CD4-positive, alpha-beta T cell (primary cell): ENCODE measurements at regions of chr19 and their contacts with region 1.

Region 1: DNA sequence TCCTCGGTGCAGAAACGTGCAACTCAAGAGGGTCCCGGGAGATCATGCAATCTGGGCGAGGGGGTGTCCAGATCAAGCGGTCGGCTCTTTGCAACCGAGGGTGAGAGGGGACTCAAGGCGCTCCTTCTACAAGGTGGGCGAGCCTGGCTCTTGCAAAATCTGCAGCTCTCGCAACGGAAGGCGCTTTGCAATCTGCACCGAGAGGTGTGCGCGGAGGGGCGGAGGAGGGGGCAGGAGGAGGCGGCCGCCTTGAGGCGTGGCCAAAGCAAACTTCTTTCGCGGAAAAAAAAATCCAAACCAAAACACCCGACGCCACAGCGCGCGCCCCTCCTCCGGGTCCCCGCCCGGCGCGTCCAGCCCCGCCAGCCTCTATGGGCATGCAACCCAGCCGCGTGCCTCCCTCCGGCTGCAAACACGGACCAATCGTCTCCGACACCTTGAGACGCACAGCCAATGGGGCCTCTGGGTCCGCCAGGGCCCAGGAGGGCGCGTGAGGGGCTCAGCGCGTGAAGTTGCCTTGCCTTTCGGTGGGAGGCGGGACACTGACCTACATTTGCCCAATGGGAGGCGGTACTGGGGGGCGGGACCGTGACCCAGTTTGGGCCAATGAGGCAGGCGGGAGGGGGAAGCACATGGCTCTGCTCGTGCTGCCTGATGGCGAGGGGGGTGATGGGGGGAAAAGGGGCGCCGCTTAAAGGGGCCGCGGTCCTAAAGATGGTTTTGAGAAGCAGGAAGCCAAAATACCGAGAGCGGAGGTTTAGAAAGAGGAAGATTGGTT is at the start of gene DBP:
- DNase-seq: peak; percentile 99 to 100 (median 100)
- ATAC-seq: peak; percentile 69
- H3K4me3 ChIP-seq: peak within 1 kb of the TSS; percentile 71
- H3K4me3 Mint-ChIP-seq: peak within 1 kb of the TSS; percentile 94
- H3K27ac ChIP-seq: peak within 1 kb of the TSS; percentile 86 to 94
- H3K27ac Mint-ChIP-seq: peak within 1 kb of the TSS; percentile 97
- H3K4me1 ChIP-seq: peaks cover 59% of the 10 kb centered on the region
- H3K4me1 Mint-ChIP-seq: peaks cover 50% of the 10 kb centered on the region
- H3K27me3 ChIP-seq: no peaks in the 10 kb centered on the region
- H3K27me3 Mint-ChIP-seq: no peaks in the 10 kb centered on the region
- CTCF ChIP-seq: no peak
- total RNA-seq, gene DBP: 48.3 to 55.6 TPM

Region 2: GRCh38 chr19:48468775-48469288 is 168.5 kb before region 1 on chr19:
- CTCF ChIA-PET with region 1: no interaction called
- POLR2A ChIA-PET with region 1: no interaction called
- intact Hi-C with region 1: no loop called
- DNase-seq: peak; percentile 98 to 100 (median 99)
- ATAC-seq: peak; percentile 89
- H3K4me3 ChIP-seq: peak overlapping the region; percentile 96
- H3K4me3 Mint-ChIP-seq: peak overlapping the region; percentile 90
- H3K27ac ChIP-seq: peak overlapping the region; percentile 25 to 79
- H3K27ac Mint-ChIP-seq: peak overlapping the region; percentile 82
- H3K4me1 ChIP-seq: peaks cover 22% of the 10 kb centered on the region
- H3K4me1 Mint-ChIP-seq: peaks cover 21% of the 10 kb centered on the region
- H3K27me3 ChIP-seq: no peaks in the 10 kb centered on the region
- H3K27me3 Mint-ChIP-seq: no peaks in the 10 kb centered on the region
- CTCF ChIP-seq: no peak

Region 3: DNA sequence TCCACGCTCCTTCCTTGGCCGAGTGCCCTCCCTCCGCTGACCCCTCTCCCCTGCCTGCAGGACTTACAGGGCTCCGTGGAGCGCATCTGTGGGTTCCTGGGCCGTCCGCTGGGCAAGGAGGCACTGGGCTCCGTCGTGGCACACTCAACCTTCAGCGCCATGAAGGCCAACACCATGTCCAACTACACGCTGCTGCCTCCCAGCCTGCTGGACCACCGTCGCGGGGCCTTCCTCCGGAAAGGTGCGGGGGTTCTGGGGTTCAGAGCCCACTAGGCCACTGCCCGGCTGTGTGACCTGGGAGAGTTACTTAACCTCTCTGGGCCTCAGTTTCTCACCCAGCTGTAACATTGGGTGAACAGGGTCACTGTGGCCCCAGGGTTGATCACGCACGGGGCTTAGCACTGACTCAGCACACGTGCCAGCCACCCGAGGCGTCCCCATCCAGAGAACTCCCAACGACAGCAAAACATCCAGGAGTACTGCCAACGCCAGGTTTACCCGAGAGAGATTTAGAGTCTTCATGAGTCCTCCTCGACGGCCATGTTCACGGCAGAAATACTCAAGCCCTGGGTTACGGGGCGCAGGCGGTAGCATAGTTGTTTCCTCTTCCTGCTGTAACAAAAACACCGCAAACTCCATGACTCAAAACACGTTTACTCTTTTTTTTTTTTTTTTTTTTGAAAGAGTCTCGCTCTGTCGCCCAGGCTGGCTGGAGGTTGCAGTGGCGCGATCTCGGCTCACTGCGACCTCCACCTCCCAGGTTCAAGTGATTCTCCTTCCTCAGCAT is 40.5 kb before region 1 on chr19:
- CTCF ChIA-PET with region 1: no interaction called
- POLR2A ChIA-PET with region 1: no interaction called
- intact Hi-C with region 1: no loop called
- DNase-seq: peak in 12 of 14 experiments; percentile 29 to 84 (median 46)
- ATAC-seq: peak; percentile 94
- H3K4me3 ChIP-seq: peak overlapping the region; percentile 55
- H3K4me3 Mint-ChIP-seq: peak overlapping the region; percentile 80
- H3K27ac ChIP-seq: peak overlapping the region; percentile 50 to 61
- H3K27ac Mint-ChIP-seq: peak overlapping the region; percentile 88
- H3K4me1 ChIP-seq: peaks cover 35% of the 10 kb centered on the region
- H3K4me1 Mint-ChIP-seq: peaks cover 10% of the 10 kb centered on the region
- H3K27me3 ChIP-seq: no peaks in the 10 kb centered on the region
- H3K27me3 Mint-ChIP-seq: no peaks in the 10 kb centered on the region
- CTCF ChIP-seq: no peak

Region 4: DNA sequence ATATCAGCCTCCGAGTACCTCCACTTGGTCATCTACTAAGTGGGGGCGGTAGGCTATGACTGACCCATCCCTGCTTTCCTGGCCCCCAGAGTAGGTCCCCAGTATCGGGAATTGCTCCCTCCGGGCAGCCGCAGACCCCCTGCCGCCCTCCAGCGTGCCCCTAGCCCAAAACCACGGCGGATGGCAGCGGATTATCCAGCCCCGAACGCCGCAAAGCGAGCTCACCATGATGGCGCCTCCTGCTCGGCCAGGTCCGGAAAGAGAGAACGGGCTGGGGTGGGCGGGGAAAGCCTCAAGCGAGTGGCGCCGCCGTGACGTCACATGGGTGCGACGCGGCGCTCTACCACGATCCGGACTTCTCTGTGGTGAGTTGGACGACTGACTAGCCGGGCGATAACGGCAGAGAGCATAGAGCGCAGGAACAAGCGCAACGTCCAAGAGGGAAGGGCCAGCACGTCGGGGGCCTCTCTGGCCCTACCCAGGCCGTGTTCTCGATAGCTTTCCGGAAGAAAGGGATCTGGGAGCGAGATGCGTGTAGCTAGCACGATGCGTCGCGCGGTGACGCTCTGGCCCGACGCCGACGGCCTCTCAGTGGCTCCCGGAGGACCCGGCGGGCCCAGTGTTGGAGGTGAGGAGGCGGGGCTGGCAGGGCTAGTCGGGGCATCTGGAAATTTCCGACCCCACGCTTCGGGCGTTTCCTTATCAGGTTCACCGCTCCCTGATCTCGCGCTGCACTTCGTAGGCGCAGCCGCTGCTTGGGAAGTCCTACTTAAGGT is 18.3 kb before region 1 on chr19 and contains the starts of genes RPL18 and SPHK2:
- CTCF ChIA-PET with region 1: interaction called, 4 read pairs
- POLR2A ChIA-PET with region 1: interaction called, 45 read pairs
- intact Hi-C with region 1: loop called (anchors 1 kb)
- DNase-seq: peak; percentile 89 to 99 (median 95)
- ATAC-seq: peak; percentile 67
- H3K4me3 ChIP-seq: peak within 1 kb of the TSS; percentile 94
- H3K4me3 Mint-ChIP-seq: peak within 1 kb of the TSS; percentile 98
- H3K27ac ChIP-seq: peak within 1 kb of the TSS; percentile 76 to 89
- H3K27ac Mint-ChIP-seq: peak within 1 kb of the TSS; percentile 97
- H3K4me1 ChIP-seq: peaks cover 64% of the 10 kb centered on the region
- H3K4me1 Mint-ChIP-seq: peaks cover 58% of the 10 kb centered on the region
- H3K27me3 ChIP-seq: no peaks in the 10 kb centered on the region
- H3K27me3 Mint-ChIP-seq: no peaks in the 10 kb centered on the region
- CTCF ChIP-seq: no peak
- total RNA-seq, gene RPL18: 2,820 to 2,913 TPM
- total RNA-seq, gene SPHK2: 14.1 to 15.3 TPM

Region 5: GRCh38 chr19:48624067-48624594 is 13.2 kb before region 1 on chr19:
- CTCF ChIA-PET with region 1: interaction called, 4 read pairs
- POLR2A ChIA-PET with region 1: interaction called, 45 read pairs
- intact Hi-C with region 1: loop called (anchors 1 kb)
- DNase-seq: peak; percentile 88 to 98 (median 95)
- ATAC-seq: peak; percentile 77
- H3K4me3 ChIP-seq: peak overlapping the region; percentile 48
- H3K4me3 Mint-ChIP-seq: peak overlapping the region; percentile 86
- H3K27ac ChIP-seq: peak overlapping the region; percentile 57 to 58
- H3K27ac Mint-ChIP-seq: peak overlapping the region; percentile 77
- H3K4me1 ChIP-seq: peaks cover 45% of the 10 kb centered on the region
- H3K4me1 Mint-ChIP-seq: peaks cover 40% of the 10 kb centered on the region
- H3K27me3 ChIP-seq: no peaks in the 10 kb centered on the region
- H3K27me3 Mint-ChIP-seq: no peaks in the 10 kb centered on the region
- CTCF ChIP-seq: no peak

Region 6: DNA sequence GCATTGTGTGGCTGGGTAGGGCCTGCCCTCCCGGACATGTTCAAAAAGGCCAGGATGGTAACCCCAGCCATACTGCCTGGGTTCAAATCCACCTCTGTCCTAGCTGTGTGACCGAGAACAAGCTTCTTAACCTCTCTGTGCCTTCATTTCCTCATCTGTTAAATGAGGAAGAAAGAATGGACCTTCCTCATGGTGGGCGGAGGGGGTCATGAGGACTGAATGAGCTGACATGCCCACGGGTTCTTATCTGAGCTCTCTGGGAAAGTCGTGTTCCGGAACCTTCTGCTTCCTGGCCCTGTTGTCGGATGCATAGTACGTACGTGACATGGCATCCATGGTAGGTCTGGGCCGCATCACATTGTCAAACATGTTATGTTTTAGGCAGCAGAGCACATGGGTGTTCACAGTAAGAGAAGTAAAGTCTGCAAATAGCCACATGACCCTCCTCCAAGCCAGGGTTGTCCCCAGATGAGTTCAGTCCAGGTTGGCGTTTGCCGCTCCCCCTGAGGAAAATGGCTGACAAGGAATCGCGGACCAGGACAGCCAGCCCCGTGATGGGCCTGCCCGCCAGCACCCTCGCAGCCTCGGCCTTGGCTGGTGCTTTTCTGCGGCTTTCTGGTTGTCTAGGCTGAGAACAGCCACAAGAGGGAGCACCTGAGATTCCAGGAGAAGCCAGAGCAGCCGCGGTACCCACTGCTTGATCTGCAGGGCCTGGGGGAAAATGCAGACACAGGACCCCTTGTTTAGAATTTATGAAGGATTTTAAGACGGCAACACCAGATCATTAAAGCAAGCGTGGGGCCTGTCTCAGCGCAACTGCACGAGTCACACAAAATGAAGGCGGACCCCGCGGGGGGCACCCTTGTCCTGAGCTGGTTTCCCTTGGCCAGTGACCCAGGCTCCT is 37.8 kb after region 1 on chr19:
- CTCF ChIA-PET with region 1: no interaction called
- POLR2A ChIA-PET with region 1: interaction called, 3 read pairs
- intact Hi-C with region 1: loop called in 1 of 2 experiments (anchors 5 kb)
- DNase-seq: peak; percentile 62 to 89 (median 68)
- ATAC-seq: peak; percentile 98
- H3K4me3 ChIP-seq: no peak overlapping the region
- H3K4me3 Mint-ChIP-seq: no peak overlapping the region
- H3K27ac ChIP-seq: no peak overlapping the region
- H3K27ac Mint-ChIP-seq: no peak overlapping the region
- H3K4me1 ChIP-seq: peaks cover 9% of the 10 kb centered on the region
- H3K4me1 Mint-ChIP-seq: peaks cover 7% of the 10 kb centered on the region
- H3K27me3 ChIP-seq: no peaks in the 10 kb centered on the region
- H3K27me3 Mint-ChIP-seq: no peaks in the 10 kb centered on the region
- CTCF ChIP-seq: peak; percentile 84

Region 7: DNA sequence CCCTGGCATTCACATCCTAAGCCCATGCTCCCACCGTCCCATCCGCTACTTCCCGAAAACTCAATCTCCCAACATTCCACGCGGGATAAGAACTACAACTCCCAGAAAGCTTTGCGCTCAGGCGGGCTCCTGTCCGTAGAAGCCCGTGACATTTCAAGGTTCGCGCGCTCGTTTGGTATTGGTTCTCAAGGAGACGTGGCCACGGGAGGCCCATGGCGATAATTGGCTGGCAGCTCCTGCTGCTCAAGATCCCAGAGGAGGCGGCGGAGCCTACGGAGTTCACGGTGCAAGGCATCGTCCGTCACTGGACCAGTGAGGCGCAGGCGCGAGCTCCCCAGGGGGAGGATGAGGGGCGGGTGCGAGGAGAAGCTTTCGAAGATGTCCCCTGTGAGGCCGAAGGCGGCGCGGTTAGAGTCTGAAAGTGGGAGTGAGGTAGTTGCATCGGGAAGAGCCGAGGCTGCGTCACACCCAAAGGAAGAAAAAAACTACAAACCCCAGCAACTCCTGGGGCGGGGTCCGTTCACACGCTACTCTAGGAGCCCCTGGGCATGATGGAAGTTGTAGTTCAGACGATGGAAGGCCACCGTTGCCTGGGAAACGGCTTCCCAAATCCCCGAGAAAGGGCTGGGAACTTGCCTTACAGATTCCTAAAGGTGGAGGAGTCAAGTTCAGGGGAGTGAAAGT is 83.4 kb after region 1 on chr19:
- CTCF ChIA-PET with region 1: no interaction called
- POLR2A ChIA-PET with region 1: interaction called, 6 read pairs
- intact Hi-C with region 1: loop called in 1 of 2 experiments (anchors 2 kb)
- DNase-seq: peak; percentile 81 to 96 (median 86)
- ATAC-seq: peak; percentile 79
- H3K4me3 ChIP-seq: peak overlapping the region; percentile 84
- H3K4me3 Mint-ChIP-seq: peak overlapping the region; percentile 92
- H3K27ac ChIP-seq: peak overlapping the region; percentile 81 to 94
- H3K27ac Mint-ChIP-seq: peak overlapping the region; percentile 96
- H3K4me1 ChIP-seq: peaks cover 32% of the 10 kb centered on the region
- H3K4me1 Mint-ChIP-seq: peaks cover 23% of the 10 kb centered on the region
- H3K27me3 ChIP-seq: no peaks in the 10 kb centered on the region
- H3K27me3 Mint-ChIP-seq: no peaks in the 10 kb centered on the region
- CTCF ChIP-seq: no peak

Region 8: DNA sequence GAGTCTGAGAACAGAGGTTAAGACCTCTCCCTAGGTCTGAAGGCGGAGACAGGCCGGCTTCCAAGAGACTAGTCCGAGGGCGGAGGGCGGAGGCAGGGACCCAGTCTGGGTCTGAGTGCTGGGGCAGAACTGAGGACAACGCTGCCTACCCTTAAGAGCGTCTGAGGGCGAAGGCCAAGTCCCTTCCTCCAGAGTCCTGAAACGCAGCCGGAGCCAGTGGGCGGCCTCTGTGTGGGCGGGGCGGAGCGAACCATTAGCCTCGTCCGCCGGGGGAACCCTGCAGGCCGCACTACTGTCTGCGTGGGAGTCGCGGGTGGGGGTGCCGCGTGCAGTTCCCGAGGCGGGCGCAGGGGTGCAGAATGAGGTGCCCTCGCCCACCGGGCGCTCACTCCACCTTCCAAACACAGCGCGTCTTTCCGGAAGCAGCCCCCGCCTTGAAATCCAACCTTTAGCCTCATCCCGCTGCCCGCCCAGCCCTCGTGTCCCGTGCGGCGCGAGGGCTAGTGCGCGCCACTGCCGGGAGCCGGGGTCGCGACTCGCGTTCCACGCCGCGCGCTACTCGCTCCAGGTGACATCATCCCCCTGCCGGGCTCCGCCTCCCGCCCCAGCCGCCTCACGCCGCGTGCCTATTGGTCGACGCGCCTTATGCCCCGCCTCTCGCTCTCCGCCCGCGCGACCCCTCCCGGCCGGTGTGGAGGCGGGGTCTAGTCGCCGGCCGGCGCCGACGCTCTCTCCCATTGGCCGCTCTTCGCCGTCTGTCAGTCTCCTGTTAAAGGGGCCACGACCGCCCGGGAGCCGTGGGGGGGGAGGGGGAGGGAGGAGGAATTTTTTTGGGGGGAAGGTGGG is 481.4 kb after region 1 on chr19 and contains the start of gene C19orf73:
- CTCF ChIA-PET with region 1: no interaction called
- POLR2A ChIA-PET with region 1: no interaction called
- intact Hi-C with region 1: loop called in 1 of 2 experiments (anchors 5 kb)
- DNase-seq: peak; percentile 91 to 99 (median 95)
- ATAC-seq: peak; percentile 78
- H3K4me3 ChIP-seq: peak within 1 kb of the TSS; percentile 69
- H3K4me3 Mint-ChIP-seq: peak within 1 kb of the TSS; percentile 92
- H3K27ac ChIP-seq: peak within 1 kb of the TSS; percentile 89 to 92
- H3K27ac Mint-ChIP-seq: peak within 1 kb of the TSS; percentile 82
- H3K4me1 ChIP-seq: peaks cover 45% of the 10 kb centered on the region
- H3K4me1 Mint-ChIP-seq: peaks cover 41% of the 10 kb centered on the region
- H3K27me3 ChIP-seq: no peaks in the 10 kb centered on the region
- H3K27me3 Mint-ChIP-seq: no peaks in the 10 kb centered on the region
- CTCF ChIP-seq: peak; percentile 46
- total RNA-seq, gene C19orf73: 1.5 to 2.3 TPM

Region 9: DNA sequence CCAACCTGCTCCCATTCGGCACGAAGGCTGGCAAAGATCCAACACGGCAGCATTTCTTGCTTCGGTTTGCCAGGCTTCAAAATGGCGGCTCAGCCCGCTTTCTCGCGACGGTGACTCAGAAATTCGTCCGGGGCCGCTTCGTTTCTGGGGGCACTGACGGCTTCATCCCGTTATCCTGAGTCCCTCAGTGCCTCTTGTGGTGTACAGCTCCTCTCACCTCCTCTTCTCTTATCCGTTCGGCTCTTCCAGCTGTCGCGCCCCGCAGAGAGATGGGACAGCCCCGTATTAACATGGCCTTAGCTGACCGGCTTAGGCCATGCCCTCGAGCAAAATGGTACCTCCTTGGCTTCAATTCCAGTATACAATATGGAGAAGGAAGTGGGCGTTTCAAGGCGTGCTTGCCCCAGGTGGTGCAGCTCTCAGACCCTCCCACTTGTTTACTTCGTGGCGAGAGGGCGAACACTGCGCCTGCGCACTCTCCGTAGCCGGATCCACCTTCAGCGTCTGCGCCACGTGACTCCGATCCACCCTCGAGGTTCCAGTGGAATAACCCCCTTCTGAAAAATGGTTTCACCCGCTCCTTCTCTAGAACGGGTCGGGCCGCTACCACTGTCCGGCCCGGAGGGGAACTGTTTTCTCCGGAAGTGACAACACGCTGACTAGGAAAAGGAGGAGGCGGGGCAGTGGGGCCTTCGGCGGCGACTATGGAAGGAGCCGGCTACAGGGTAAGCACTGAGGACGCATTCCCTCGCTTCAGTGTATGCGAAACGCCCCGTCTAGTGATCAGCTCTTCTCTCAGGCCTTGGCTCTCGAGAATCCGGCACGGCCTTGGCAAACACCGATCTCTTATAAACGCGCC is 1239.9 kb after region 1 on chr19 and contains the starts of genes AKT1S1 and TBC1D17:
- CTCF ChIA-PET with region 1: no interaction called
- POLR2A ChIA-PET with region 1: no interaction called
- intact Hi-C with region 1: loop called in 1 of 2 experiments (anchors 10 kb)
- DNase-seq: peak; percentile 95 to 100 (median 98)
- ATAC-seq: peak; percentile 60
- H3K4me3 ChIP-seq: peak within 1 kb of the TSS; percentile 88
- H3K4me3 Mint-ChIP-seq: no peak within 1 kb of the TSS
- H3K27ac ChIP-seq: peak within 1 kb of the TSS; percentile 98 to 100
- H3K27ac Mint-ChIP-seq: no peak within 1 kb of the TSS
- H3K4me1 ChIP-seq: peaks cover 35% of the 10 kb centered on the region
- H3K4me1 Mint-ChIP-seq: peaks cover 18% of the 10 kb centered on the region
- H3K27me3 ChIP-seq: no peaks in the 10 kb centered on the region
- H3K27me3 Mint-ChIP-seq: no peaks in the 10 kb centered on the region
- CTCF ChIP-seq: no peak
- total RNA-seq, gene AKT1S1: 15.1 to 15.8 TPM
- total RNA-seq, gene TBC1D17: 35.5 to 35.8 TPM